ENCODE measurements at regions of chr6 and their contacts with region 1.

Region 1: GRCh38 chr6:80106418-80107235 is at the start of gene BCKDHB:
- DNase-seq: peak; percentile 98
- ATAC-seq: peak; percentile 98
- H3K4me3 Mint-ChIP-seq: peak within 1 kb of the TSS; percentile 79
- H3K27ac Mint-ChIP-seq: peak within 1 kb of the TSS; percentile 92
- H3K4me1 Mint-ChIP-seq: peaks cover 16% of the 10 kb centered on the region
- H3K27me3 Mint-ChIP-seq: peaks cover 9% of the 10 kb centered on the region
- CTCF ChIP-seq: no peak
- total RNA-seq, gene BCKDHB: 17.8 to 19.3 TPM

Region 2: DNA sequence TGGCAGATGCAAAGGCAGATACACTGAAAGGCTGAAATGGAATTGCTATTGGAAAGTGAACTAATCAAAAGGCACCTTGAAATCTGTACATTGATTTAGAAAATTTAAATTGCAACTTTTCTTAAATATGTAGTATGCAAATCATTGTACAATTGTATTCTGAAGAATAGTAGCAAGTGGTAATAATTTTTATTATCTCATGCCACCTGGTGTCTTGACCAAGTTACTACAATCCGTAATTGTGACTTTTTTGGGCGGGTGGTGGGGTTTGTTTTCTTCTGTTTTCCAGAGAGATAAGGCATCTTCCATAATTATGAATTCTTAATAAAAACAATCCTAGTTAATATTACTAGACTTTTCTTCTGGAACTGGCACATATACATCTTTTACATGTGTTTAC is 12.6 kb before region 1 on chr6:
- CTCF ChIA-PET with region 1: interaction called, 11 read pairs
- POLR2A ChIA-PET with region 1: no interaction called
- intact Hi-C with region 1: no loop called
- DNase-seq: peak; percentile 22
- ATAC-seq: peak; percentile 64
- H3K4me3 Mint-ChIP-seq: no peak overlapping the region
- H3K27ac Mint-ChIP-seq: no peak overlapping the region
- H3K4me1 Mint-ChIP-seq: no peaks in the 10 kb centered on the region
- H3K27me3 Mint-ChIP-seq: peaks cover 3% of the 10 kb centered on the region
- CTCF ChIP-seq: peak; percentile 82

Measured in activated CD8-positive, alpha-beta T cell treated with anti-CD3 and anti-CD28 coated beads for 36 hours (primary cell).